Transverse colon (tissue), 4 donors: ENCODE measurements at regions of chr5 and their contacts with region 1.

Region 1: DNA sequence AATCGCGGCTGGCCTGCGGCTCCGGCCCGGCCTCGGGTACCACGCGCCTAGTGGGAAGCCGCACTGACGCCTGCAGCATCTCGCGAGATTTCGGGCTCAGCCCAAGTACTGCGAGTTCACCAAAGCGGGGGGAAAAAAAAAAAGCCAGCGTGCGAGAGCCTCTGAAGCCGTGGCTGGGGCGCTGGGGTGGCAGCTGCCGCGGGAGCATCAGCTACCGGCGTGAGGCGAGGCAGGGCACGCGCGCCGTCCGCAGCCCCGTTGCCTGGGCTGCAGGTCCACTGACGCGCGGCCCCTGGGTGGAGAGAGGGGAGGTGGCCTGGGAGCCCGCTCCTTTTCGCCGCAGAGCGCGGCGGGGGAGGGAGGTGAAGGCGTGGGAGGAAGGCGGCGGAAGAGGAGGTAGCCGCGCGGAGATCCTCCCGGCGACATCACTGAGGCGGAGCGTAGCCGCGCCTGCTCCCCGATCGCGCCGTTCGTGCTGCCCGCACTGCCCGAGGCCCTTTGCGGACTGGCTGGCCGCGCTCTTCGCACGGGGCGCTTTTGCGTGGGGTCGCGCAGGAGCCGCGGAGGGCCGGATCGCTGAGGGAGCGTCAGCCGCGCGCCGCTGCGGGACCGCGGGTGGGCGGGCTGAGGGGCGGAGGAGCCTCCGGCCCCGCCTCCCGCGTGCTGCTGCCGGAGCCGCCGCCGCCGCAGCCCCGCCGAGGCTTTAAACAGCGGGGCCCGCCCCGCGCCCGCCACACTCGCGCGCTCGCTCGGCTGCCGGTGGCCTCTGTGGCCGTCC is at the start of gene SLC12A2:
- DNase-seq: peak; percentile 92
- H3K4me3 ChIP-seq: peak within 1 kb of the TSS; percentile 70 to 95 (median 94)
- H3K27ac ChIP-seq: peak within 1 kb of the TSS; percentile 93 to 99 (median 96)
- H3K4me1 ChIP-seq: peaks cover 15 to 62% (median 22%) of the 10 kb centered on the region in 4 donors
- H3K27me3 ChIP-seq: no peaks in the 10 kb centered on the region
- CTCF ChIP-seq: peak in 3 of 5 experiments; percentile 6 to 38 (median 10)
- EP300 ChIP-seq: no peak
- POLR2A ChIP-seq: peak; percentile 78
- total RNA-seq, gene SLC12A2: 40.4 to 91.1 (median 73.5) TPM

Region 2: GRCh38 chr5:127757576-127757975 is 325.6 kb before region 1 on chr5:
- in situ Hi-C with region 1: no loop called
- intact Hi-C with region 1: loop called (anchors 10 kb)
- DNase-seq: peak; percentile 39
- H3K4me3 ChIP-seq: no peak overlapping the region
- H3K27ac ChIP-seq: peak overlapping the region in 3 of 4 donors; percentile 51 to 69 (median 57)
- H3K4me1 ChIP-seq: peaks cover 0 to 41% (median 22%) of the 10 kb centered on the region in 4 donors
- H3K27me3 ChIP-seq: no peaks in the 10 kb centered on the region
- CTCF ChIP-seq: peak; percentile 32 to 69 (median 48)
- EP300 ChIP-seq: no peak
- POLR2A ChIP-seq: no peak

Region 3: GRCh38 chr5:128334010-128334716 is 250.9 kb after region 1 on chr5:
- in situ Hi-C with region 1: no loop called
- intact Hi-C with region 1: no loop called
- DNase-seq: no peak
- H3K4me3 ChIP-seq: no peak overlapping the region
- H3K27ac ChIP-seq: no peak overlapping the region
- H3K4me1 ChIP-seq: no peaks in the 10 kb centered on the region
- H3K27me3 ChIP-seq: no peaks in the 10 kb centered on the region
- CTCF ChIP-seq: no peak
- EP300 ChIP-seq: no peak
- POLR2A ChIP-seq: no peak

Region 4: GRCh38 chr5:128426090-128426534 is 342.9 kb after region 1 on chr5:
- in situ Hi-C with region 1: no loop called
- intact Hi-C with region 1: no loop called
- DNase-seq: no peak
- H3K4me3 ChIP-seq: no peak overlapping the region
- H3K27ac ChIP-seq: no peak overlapping the region
- H3K4me1 ChIP-seq: no peaks in the 10 kb centered on the region
- H3K27me3 ChIP-seq: no peaks in the 10 kb centered on the region
- CTCF ChIP-seq: no peak
- EP300 ChIP-seq: no peak
- POLR2A ChIP-seq: no peak